ENCODE measurements at regions of chr12 and their contacts with region 1.

Region 1: DNA sequence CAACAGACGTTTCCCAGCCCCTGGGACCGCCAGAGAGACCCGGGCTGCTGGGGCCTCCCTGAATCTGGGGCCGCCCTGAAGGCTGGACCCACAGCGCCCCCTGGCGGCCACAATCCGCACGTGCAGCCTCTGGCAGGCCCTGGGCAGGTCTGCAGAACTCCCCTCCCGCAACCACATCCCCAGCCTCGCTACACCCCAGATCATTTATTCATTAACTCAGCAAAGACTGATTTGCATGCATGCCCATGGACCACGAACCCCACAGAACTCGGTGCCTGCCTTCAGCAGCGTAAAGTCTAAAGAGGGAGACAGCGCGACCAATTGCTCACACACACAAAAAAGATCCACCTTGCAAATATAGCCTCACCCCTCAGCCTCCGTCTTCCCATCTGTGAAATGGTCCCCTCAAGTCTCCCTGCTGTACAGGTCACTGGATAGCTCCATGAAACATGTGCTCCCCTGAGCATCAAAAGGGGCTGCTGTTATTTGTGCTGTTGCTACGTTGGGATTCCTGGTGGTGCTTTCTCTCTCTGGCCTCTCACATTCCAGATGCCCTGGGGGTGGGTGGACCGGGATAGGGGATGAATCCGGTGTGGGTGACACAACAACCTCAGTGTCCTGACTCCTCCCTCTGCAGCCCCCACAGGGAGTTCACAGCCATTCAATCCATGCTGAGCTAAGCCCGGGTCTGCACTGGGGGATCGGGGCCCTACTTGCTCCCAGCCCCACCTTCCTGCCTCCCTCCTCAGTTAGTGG is 96.4 kb downstream of the SCARB1 start:
- DNase-seq: peak; percentile 85
- H3K4me3 Mint-ChIP-seq: no peak overlapping the region
- H3K27ac Mint-ChIP-seq: peak overlapping the region; percentile 20
- H3K4me1 Mint-ChIP-seq: peaks cover 9% of the 10 kb centered on the region
- H3K27me3 Mint-ChIP-seq: peaks cover 41% of the 10 kb centered on the region

Region 2: DNA sequence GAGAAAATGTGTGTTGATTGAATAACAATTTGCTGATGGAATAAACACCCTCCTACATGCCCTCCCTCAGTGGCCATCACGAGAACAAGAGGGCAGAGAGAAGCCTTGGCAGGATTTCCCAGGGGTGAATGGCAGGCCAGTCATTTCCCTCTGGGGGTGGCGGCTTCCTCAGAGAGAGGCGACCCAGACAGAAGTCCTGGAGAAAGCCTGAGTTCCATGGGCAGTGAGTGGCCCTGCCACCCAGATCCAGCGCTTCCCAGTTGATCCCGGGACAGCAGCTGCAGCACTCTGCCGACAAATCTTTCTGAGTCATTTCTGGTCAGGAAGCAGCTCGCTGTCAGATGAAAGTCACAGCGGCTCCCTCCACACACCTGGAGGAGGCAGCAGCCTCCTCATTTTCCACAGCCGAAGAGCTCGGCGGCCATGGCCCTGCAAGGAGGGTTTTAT is 26.5 kb before region 1 on chr12:
- CTCF ChIA-PET with region 1: interaction called, 12 read pairs
- DNase-seq: no peak
- H3K4me3 Mint-ChIP-seq: no peak overlapping the region
- H3K27ac Mint-ChIP-seq: no peak overlapping the region
- H3K4me1 Mint-ChIP-seq: peaks cover 23% of the 10 kb centered on the region
- H3K27me3 Mint-ChIP-seq: peaks cover 67% of the 10 kb centered on the region

Region 3: GRCh38 chr12:124940549-124941527 is 173.6 kb after region 1 on chr12:
- CTCF ChIA-PET with region 1: no interaction called
- DNase-seq: peak; percentile 90
- H3K4me3 Mint-ChIP-seq: no peak overlapping the region
- H3K27ac Mint-ChIP-seq: no peak overlapping the region
- H3K4me1 Mint-ChIP-seq: peaks cover 24% of the 10 kb centered on the region
- H3K27me3 Mint-ChIP-seq: no peaks in the 10 kb centered on the region